B cell (primary cell): ENCODE measurements at regions of chr12 and their contacts with region 1.

Region 1: GRCh38 chr12:51368640-51369517 is 22.3 kb downstream of the GALNT6 start:
- DNase-seq: peak; percentile 98
- ATAC-seq: peak; percentile 96
- H3K4me3 ChIP-seq: peak overlapping the region in 4 of 5 experiments; percentile 14 to 44 (median 20)
- H3K4me3 Mint-ChIP-seq: peak overlapping the region; percentile 42
- H3K27ac ChIP-seq: peak overlapping the region; percentile 74 to 77
- H3K27ac Mint-ChIP-seq: peak overlapping the region; percentile 97
- H3K4me1 ChIP-seq: peaks cover 51 to 61% of the 10 kb centered on the region in 2 donors
- H3K4me1 Mint-ChIP-seq: peaks cover 54% of the 10 kb centered on the region
- H3K27me3 ChIP-seq: no peaks in the 10 kb centered on the region
- H3K27me3 Mint-ChIP-seq: no peaks in the 10 kb centered on the region
- CTCF ChIP-seq: no peak

Region 2: GRCh38 chr12:50894241-50894640 is 474.6 kb before region 1 on chr12:
- CTCF ChIA-PET with region 1: no interaction called
- POLR2A ChIA-PET with region 1: no interaction called
- intact Hi-C with region 1: no loop called
- DNase-seq: no peak
- ATAC-seq: no peak
- H3K4me3 ChIP-seq: no peak overlapping the region
- H3K4me3 Mint-ChIP-seq: no peak overlapping the region
- H3K27ac ChIP-seq: no peak overlapping the region
- H3K27ac Mint-ChIP-seq: no peak overlapping the region
- H3K4me1 ChIP-seq: peaks cover 6% of the 10 kb centered on the region in 2 donors
- H3K4me1 Mint-ChIP-seq: peaks cover 8% of the 10 kb centered on the region
- H3K27me3 ChIP-seq: no peaks in the 10 kb centered on the region
- H3K27me3 Mint-ChIP-seq: no peaks in the 10 kb centered on the region
- CTCF ChIP-seq: no peak

Region 3: GRCh38 chr12:50924439-50925341 is 444.2 kb before region 1 on chr12:
- CTCF ChIA-PET with region 1: no interaction called
- POLR2A ChIA-PET with region 1: interaction called, 3 read pairs
- intact Hi-C with region 1: loop called (anchors 1 kb)
- DNase-seq: peak; percentile 83
- ATAC-seq: peak; percentile 94
- H3K4me3 ChIP-seq: peak overlapping the region; percentile 75 to 99 (median 88)
- H3K4me3 Mint-ChIP-seq: peak overlapping the region; percentile 96
- H3K27ac ChIP-seq: peak overlapping the region; percentile 81 to 91
- H3K27ac Mint-ChIP-seq: peak overlapping the region; percentile 98
- H3K4me1 ChIP-seq: peaks cover 43 to 44% of the 10 kb centered on the region in 2 donors
- H3K4me1 Mint-ChIP-seq: peaks cover 63% of the 10 kb centered on the region
- H3K27me3 ChIP-seq: no peaks in the 10 kb centered on the region
- H3K27me3 Mint-ChIP-seq: no peaks in the 10 kb centered on the region
- CTCF ChIP-seq: no peak

Region 4: GRCh38 chr12:51270067-51270970 is 98.6 kb before region 1 on chr12 and contains the start of gene SMAGP:
- CTCF ChIA-PET with region 1: no interaction called
- POLR2A ChIA-PET with region 1: no interaction called
- intact Hi-C with region 1: loop called (anchors 1 kb)
- DNase-seq: peak; percentile 79
- ATAC-seq: peak; percentile 75
- H3K4me3 ChIP-seq: peak within 1 kb of the TSS; percentile 52 to 86 (median 74)
- H3K4me3 Mint-ChIP-seq: peak within 1 kb of the TSS; percentile 95
- H3K27ac ChIP-seq: peak within 1 kb of the TSS; percentile 12 to 64
- H3K27ac Mint-ChIP-seq: peak within 1 kb of the TSS; percentile 91
- H3K4me1 ChIP-seq: peaks cover 19 to 20% of the 10 kb centered on the region in 2 donors
- H3K4me1 Mint-ChIP-seq: peaks cover 31% of the 10 kb centered on the region
- H3K27me3 ChIP-seq: no peaks in the 10 kb centered on the region
- H3K27me3 Mint-ChIP-seq: no peaks in the 10 kb centered on the region
- CTCF ChIP-seq: no peak
- total RNA-seq, gene SMAGP: 8.0 and 10.4 TPM in 2 replicates

Region 5: GRCh38 chr12:51326762-51327439 is 42.0 kb before region 1 on chr12:
- CTCF ChIA-PET with region 1: no interaction called
- POLR2A ChIA-PET with region 1: interaction called, 4 read pairs
- intact Hi-C with region 1: loop called (anchors 1 kb)
- DNase-seq: peak; percentile 73
- ATAC-seq: peak; percentile 28
- H3K4me3 ChIP-seq: peak overlapping the region in 1 of 5 experiments; percentile 22
- H3K4me3 Mint-ChIP-seq: peak overlapping the region; percentile 35
- H3K27ac ChIP-seq: peak overlapping the region; percentile 59 to 64
- H3K27ac Mint-ChIP-seq: peak overlapping the region; percentile 83
- H3K4me1 ChIP-seq: peaks cover 72 to 79% of the 10 kb centered on the region in 2 donors
- H3K4me1 Mint-ChIP-seq: peaks cover 80% of the 10 kb centered on the region
- H3K27me3 ChIP-seq: no peaks in the 10 kb centered on the region
- H3K27me3 Mint-ChIP-seq: no peaks in the 10 kb centered on the region
- CTCF ChIP-seq: no peak

Region 6: GRCh38 chr12:51391283-51392162 is 22.6 kb after region 1 on chr12 and contains the start of gene GALNT6:
- CTCF ChIA-PET with region 1: interaction called, 6 read pairs
- POLR2A ChIA-PET with region 1: interaction called, 22 read pairs
- intact Hi-C with region 1: loop called (anchors 1 kb)
- DNase-seq: peak; percentile 88
- ATAC-seq: peak; percentile 79
- H3K4me3 ChIP-seq: peak within 1 kb of the TSS; percentile 55 to 87 (median 83)
- H3K4me3 Mint-ChIP-seq: peak within 1 kb of the TSS; percentile 90
- H3K27ac ChIP-seq: peak within 1 kb of the TSS; percentile 68 to 87
- H3K27ac Mint-ChIP-seq: peak within 1 kb of the TSS; percentile 88
- H3K4me1 ChIP-seq: peaks cover 68 to 79% of the 10 kb centered on the region in 2 donors
- H3K4me1 Mint-ChIP-seq: peaks cover 74% of the 10 kb centered on the region
- H3K27me3 ChIP-seq: no peaks in the 10 kb centered on the region
- H3K27me3 Mint-ChIP-seq: no peaks in the 10 kb centered on the region
- CTCF ChIP-seq: no peak
- total RNA-seq, gene GALNT6: 8.5 and 9.0 TPM in 2 replicates

Region 7: DNA sequence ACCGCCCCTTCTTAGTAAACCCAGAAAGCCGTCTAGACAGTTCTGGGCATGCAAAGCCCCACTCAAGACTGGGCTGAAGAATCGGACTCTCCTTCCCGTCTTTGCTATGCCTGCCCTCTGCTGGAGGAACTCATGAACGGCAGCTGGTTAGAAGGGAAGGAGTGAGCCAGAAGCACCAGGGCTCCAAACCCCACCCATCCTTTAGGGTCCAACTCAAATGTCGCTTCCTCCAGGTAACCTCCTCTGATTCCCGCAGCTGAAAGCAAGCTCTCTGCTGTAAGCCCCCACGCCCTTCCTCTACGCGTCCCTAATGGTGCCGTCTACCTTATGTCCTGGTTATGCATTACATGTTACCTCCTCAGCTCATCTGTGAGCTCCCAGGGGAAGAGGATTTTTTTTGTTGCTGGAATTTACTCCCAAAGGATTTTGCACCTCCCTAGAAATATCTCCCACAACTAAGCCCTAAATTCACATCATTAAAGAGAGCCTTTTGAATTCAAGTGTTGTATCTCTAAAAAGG is 163.2 kb after region 1 on chr12:
- CTCF ChIA-PET with region 1: interaction called, 3 read pairs
- POLR2A ChIA-PET with region 1: no interaction called
- intact Hi-C with region 1: loop called (anchors 2 kb)
- DNase-seq: peak; percentile 84
- ATAC-seq: peak; percentile 98
- H3K4me3 ChIP-seq: no peak overlapping the region
- H3K4me3 Mint-ChIP-seq: no peak overlapping the region
- H3K27ac ChIP-seq: no peak overlapping the region
- H3K27ac Mint-ChIP-seq: no peak overlapping the region
- H3K4me1 ChIP-seq: peaks cover 7 to 8% of the 10 kb centered on the region in 2 donors
- H3K4me1 Mint-ChIP-seq: peaks cover 9% of the 10 kb centered on the region
- H3K27me3 ChIP-seq: peaks cover 0 to 13% (median 0%) of the 10 kb centered on the region in 4 experiments
- H3K27me3 Mint-ChIP-seq: peaks cover 30% of the 10 kb centered on the region
- CTCF ChIP-seq: peak; percentile 92